Endothelial cell of umbilical vein (primary cell): ENCODE measurements at regions of chr2 and their contacts with region 1.

Region 1: GRCh38 chr2:218360447-218360846 is 3.8 kb downstream of the CATIP start:
- DNase-seq: no peak
- H3K4me3 ChIP-seq: no peak overlapping the region
- H3K27ac ChIP-seq: no peak overlapping the region
- H3K4me1 ChIP-seq: no peaks in the 10 kb centered on the region
- H3K27me3 ChIP-seq: no peaks in the 10 kb centered on the region
- CTCF ChIP-seq: no peak
- POLR2A ChIP-seq: no peak

Region 2: DNA sequence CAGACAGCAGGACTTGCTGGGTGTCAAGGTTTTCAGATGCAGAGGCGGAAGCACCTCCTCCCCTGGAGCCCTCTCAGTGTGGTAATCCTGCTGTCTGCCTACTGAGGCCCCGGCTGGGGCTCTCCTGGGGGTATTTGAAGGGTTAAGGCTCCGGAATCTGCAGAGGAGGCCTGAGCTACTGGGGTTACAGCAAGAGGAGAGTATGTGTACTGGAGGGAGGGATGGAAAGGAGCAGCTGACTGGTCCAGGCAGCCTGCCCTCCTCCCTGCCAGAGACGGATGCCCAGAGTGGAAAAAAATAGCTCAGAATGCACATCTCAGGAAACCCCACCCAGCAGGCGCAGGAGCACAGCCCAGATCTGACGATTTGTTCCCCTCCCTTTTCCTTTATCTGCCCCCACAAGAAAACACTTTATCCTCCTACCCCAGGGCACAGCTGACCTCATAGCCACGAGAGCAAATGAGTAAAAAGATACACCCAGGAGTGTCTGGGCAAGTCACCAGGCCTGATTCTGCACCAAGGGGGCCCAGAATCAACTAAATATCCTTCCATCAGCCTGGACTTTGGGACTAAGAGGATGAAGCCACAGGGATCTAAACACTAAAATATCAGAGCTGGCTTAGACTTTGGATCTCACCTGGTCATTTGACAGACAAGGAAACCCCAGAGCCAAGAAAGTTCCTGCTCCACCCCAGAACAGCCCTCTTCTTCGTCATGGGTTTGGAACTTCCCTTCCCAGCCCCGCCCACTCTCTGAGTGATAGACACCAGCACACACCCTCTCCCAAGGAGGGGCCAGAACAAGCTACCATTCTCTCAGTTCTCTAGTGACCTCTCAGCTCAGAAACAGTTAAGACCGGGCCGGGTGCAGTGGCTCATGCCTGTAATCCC is 73.6 kb before region 1 on chr2:
- CTCF ChIA-PET with region 1: interaction called, 25 read pairs
- POLR2A ChIA-PET with region 1: interaction called, 3 read pairs
- dilution Hi-C with region 1: no loop called
- intact Hi-C with region 1: loop called (anchors 2 kb)
- DNase-seq: peak; percentile 93
- H3K4me3 ChIP-seq: no peak overlapping the region
- H3K27ac ChIP-seq: peak overlapping the region; percentile 88
- H3K4me1 ChIP-seq: peaks cover 77% of the 10 kb centered on the region
- H3K27me3 ChIP-seq: no peaks in the 10 kb centered on the region
- CTCF ChIP-seq: no peak
- POLR2A ChIP-seq: peak; percentile 16

Region 3: DNA sequence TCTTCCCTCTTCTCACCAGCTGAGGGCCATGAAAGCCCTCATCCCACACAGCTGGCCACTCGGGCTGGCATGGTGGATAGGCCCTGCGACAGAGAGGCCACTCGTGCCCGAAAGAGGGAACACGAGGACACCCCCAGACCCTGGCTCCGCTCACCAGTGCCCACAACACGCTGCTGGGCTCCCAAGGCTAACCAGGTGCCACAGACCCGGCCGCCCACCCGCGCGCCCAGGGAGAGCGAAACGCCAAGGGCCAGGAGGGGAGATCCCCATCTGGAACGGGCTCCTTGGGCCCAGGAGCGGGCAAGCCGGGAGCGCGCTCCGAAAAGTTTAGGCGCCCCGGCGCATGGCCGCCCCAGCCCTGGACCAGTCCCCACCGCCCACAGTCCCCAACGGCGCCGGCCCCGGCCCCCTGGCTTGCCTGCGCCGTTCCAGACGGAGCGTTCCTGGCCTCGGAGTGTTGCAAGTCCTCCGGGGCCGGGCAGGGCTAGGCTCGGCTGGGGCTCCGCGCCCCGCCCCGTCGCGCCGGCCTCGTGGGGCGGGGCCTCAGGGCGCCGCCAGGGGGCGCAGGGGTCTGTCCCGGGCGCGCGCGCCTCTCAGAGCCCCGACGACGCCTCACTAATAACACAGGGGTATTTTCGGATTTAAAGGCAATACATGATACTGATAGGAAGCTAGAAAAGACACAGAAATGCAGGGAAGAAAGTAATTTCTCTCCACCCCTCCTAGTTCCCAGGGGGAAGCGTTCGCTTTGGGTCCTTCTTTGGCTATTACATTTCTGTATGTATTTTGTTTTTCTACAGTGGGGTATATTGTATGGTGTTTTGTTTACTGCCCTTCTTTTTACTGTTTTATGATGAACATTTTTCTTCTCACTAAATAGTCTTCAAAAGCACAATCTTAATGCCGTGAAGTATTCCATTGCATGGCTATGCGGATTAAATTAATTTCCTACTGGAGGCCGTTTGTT is 68.1 kb before region 1 on chr2 and contains the start of gene TMBIM1:
- CTCF ChIA-PET with region 1: interaction called, 178 read pairs
- POLR2A ChIA-PET with region 1: interaction called, 3 read pairs
- dilution Hi-C with region 1: no loop called
- intact Hi-C with region 1: loop called (anchors 2 kb)
- DNase-seq: peak; percentile 69
- H3K4me3 ChIP-seq: peak within 1 kb of the TSS; percentile 69 to 79 (median 74)
- H3K27ac ChIP-seq: peak within 1 kb of the TSS; percentile 63
- H3K4me1 ChIP-seq: peaks cover 63% of the 10 kb centered on the region
- H3K27me3 ChIP-seq: no peaks in the 10 kb centered on the region
- CTCF ChIP-seq: peak; percentile 61 to 97
- POLR2A ChIP-seq: peak; percentile 68
- total RNA-seq, gene TMBIM1: 141 and 159 TPM in 2 replicates

Region 4: GRCh38 chr2:218301176-218301819 is 59.1 kb before region 1 on chr2:
- CTCF ChIA-PET with region 1: interaction called, 178 read pairs
- POLR2A ChIA-PET with region 1: no interaction called
- dilution Hi-C with region 1: no loop called
- intact Hi-C with region 1: loop called (anchors 1 kb)
- DNase-seq: peak; percentile 88
- H3K4me3 ChIP-seq: no peak overlapping the region
- H3K27ac ChIP-seq: no peak overlapping the region
- H3K4me1 ChIP-seq: peaks cover 6% of the 10 kb centered on the region
- H3K27me3 ChIP-seq: no peaks in the 10 kb centered on the region
- CTCF ChIP-seq: peak; percentile 86
- POLR2A ChIP-seq: no peak

Region 5: GRCh38 chr2:218307415-218308090 is 52.9 kb before region 1 on chr2:
- CTCF ChIA-PET with region 1: interaction called, 178 read pairs
- POLR2A ChIA-PET with region 1: no interaction called
- dilution Hi-C with region 1: no loop called
- intact Hi-C with region 1: no loop called
- DNase-seq: no peak
- H3K4me3 ChIP-seq: no peak overlapping the region
- H3K27ac ChIP-seq: no peak overlapping the region
- H3K4me1 ChIP-seq: no peaks in the 10 kb centered on the region
- H3K27me3 ChIP-seq: no peaks in the 10 kb centered on the region
- CTCF ChIP-seq: no peak
- POLR2A ChIP-seq: no peak

Region 6: GRCh38 chr2:218322895-218323808 is 37.3 kb before region 1 on chr2:
- CTCF ChIA-PET with region 1: interaction called, 38 read pairs
- POLR2A ChIA-PET with region 1: no interaction called
- dilution Hi-C with region 1: no loop called
- intact Hi-C with region 1: loop called (anchors 1 kb)
- DNase-seq: peak; percentile 95
- H3K4me3 ChIP-seq: peak overlapping the region; percentile 49 to 71 (median 67)
- H3K27ac ChIP-seq: peak overlapping the region; percentile 91
- H3K4me1 ChIP-seq: peaks cover 24% of the 10 kb centered on the region
- H3K27me3 ChIP-seq: no peaks in the 10 kb centered on the region
- CTCF ChIP-seq: no peak
- POLR2A ChIP-seq: no peak

Region 7: DNA sequence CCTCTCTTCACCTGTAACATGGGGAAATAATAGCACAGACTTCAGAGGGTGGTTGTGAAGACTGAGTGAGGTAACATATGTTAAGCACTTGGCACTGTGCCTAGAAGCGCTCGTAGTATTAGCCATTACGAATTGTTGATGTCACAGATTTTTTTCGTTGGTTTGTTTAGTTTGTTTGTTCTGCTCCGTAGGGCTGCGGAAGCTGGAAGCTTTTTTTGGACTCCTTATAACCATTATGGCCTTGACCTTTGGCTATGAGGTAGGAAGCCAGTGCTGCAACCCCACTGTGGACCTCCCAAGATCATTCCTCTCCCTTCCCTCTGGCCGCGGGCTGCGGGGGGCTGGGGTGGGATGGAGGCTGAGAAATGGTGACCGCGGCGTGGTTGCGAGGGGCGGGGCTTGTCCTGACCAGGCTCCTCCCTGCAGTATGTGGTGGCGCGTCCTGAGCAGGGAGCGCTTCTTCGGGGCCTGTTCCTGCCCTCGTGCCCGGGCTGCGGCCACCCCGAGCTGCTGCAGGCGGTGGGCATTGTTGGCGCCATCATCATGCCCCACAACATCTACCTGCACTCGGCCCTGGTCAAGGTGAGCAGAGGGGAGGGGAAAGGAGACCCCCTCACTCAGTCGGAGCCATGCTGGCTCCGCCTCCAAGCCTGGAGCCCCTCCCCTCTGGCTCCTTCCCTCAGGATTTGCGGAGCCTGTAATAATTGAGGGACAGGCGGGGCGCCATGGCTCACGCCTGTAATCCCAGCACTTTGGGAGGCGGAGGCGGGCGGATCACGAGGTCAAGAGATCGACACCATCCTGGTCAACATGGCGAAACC is 27.1 kb after region 1 on chr2:
- CTCF ChIA-PET with region 1: interaction called, 7 read pairs
- POLR2A ChIA-PET with region 1: no interaction called
- dilution Hi-C with region 1: no loop called
- intact Hi-C with region 1: loop called (anchors 1 kb)
- DNase-seq: peak; percentile 76
- H3K4me3 ChIP-seq: peak overlapping the region; percentile 16 to 46 (median 29)
- H3K27ac ChIP-seq: no peak overlapping the region
- H3K4me1 ChIP-seq: peaks cover 3% of the 10 kb centered on the region
- H3K27me3 ChIP-seq: peaks cover 0 to 2% of the 10 kb centered on the region in 2 experiments
- CTCF ChIP-seq: no peak
- POLR2A ChIP-seq: no peak